ENCODE measurements at regions of chr20 and their contacts with region 1.

Region 1: DNA sequence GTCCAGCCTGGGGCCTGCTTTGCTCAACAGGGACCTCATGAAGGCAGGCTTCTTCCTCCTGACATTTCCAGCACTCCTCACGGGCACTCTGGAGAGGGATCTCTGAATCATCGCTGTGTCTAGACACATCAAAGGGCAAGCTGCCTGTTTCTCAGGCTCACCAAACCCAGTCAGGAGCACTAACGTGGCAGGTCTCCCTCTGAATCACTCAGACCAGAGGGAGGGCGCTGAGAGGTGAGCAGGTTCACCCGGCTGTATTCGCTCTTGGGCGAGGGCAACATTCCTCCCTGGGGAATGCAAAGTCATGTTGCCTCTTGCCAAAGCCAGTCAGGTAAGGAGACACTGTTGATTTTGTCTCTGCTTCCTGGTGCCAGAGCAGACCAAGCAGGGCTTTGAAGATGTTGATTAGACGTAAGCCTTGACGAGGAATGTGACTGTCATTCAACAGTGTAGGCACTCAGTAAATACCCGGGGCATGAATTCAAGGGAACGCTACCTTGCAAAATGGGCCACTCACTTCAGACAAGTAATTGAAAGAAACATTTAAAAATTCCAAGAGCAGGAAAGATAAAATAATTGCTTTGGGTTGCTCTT is 50.1 kb downstream of the CYP24A1 start:
- DNase-seq: peak; percentile 98 to 100
- H3K4me3 ChIP-seq: peak overlapping the region; percentile 35; the same call in 1 of the 2 replicates
- H3K27ac ChIP-seq: peak overlapping the region; percentile 99
- H3K4me1 ChIP-seq: peaks cover 71% of the 10 kb centered on the region
- H3K27me3 ChIP-seq: no peaks in the 10 kb centered on the region
- CTCF ChIP-seq: no peak

Region 2: GRCh38 chr20:54103067-54103761 is 20.5 kb before region 1 on chr20:
- CTCF ChIA-PET with region 1: interaction called, 8 read pairs
- POLR2A ChIA-PET with region 1: no interaction called
- intact Hi-C with region 1: loop called (anchors 1 kb)
- DNase-seq: peak in 1 of 2 experiments; percentile 51
- H3K4me3 ChIP-seq: no peak overlapping the region
- H3K27ac ChIP-seq: no peak overlapping the region
- H3K4me1 ChIP-seq: no peaks in the 10 kb centered on the region; the same call in 1 of the 2 replicates
- H3K27me3 ChIP-seq: no peaks in the 10 kb centered on the region
- CTCF ChIP-seq: peak; percentile 62

Region 3: GRCh38 chr20:54140927-54141566 is 17.4 kb after region 1 on chr20:
- CTCF ChIA-PET with region 1: no interaction called
- POLR2A ChIA-PET with region 1: no interaction called
- intact Hi-C with region 1: loop called (anchors 1 kb)
- DNase-seq: peak; percentile 26 to 96
- H3K4me3 ChIP-seq: no peak overlapping the region
- H3K27ac ChIP-seq: peak overlapping the region; percentile 93
- H3K4me1 ChIP-seq: peaks cover 33% of the 10 kb centered on the region
- H3K27me3 ChIP-seq: no peaks in the 10 kb centered on the region
- CTCF ChIP-seq: no peak

Region 4: DNA sequence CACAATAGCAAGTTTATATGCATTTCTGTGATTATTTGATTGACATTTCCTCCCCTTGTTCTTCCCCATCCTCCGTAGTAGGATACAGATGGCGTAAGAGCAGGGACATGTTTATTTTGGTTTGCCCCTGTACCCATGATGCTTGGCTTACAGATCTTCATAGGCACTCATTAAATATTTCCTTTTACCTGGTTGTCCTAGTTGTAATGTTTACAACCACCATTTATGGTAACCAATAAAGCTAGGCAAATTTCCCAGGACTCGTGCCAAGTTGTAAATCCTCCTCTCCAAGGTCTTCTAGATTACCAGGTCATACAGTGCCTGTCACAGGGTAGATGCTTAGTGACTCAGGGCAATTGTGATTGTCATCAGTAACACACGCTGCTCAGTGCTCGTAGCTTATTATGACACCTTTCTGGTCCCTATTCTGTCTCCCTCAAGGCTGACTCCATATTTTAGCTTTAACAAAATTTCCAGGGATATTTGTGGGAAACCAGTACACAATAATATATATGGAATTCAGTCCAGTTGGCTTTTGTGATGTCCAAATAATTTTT is 25.3 kb after region 1 on chr20:
- CTCF ChIA-PET with region 1: no interaction called
- POLR2A ChIA-PET with region 1: no interaction called
- intact Hi-C with region 1: loop called (anchors 1 kb)
- DNase-seq: peak; percentile 61 to 100
- H3K4me3 ChIP-seq: no peak overlapping the region
- H3K27ac ChIP-seq: peak overlapping the region; percentile 85
- H3K4me1 ChIP-seq: peaks cover 71% of the 10 kb centered on the region
- H3K27me3 ChIP-seq: no peaks in the 10 kb centered on the region
- CTCF ChIP-seq: no peak

Region 5: GRCh38 chr20:54167909-54168872 is 44.5 kb after region 1 on chr20:
- CTCF ChIA-PET with region 1: interaction called, 3 read pairs
- POLR2A ChIA-PET with region 1: no interaction called
- intact Hi-C with region 1: loop called (anchors 1 kb)
- DNase-seq: peak; percentile 80 to 96
- H3K4me3 ChIP-seq: peak overlapping the region; percentile 63
- H3K27ac ChIP-seq: peak overlapping the region; percentile 96
- H3K4me1 ChIP-seq: peaks cover 46% of the 10 kb centered on the region
- H3K27me3 ChIP-seq: no peaks in the 10 kb centered on the region
- CTCF ChIP-seq: no peak

Region 6: GRCh38 chr20:54257071-54257840 is 133.6 kb after region 1 on chr20:
- CTCF ChIA-PET with region 1: interaction called, 3 read pairs
- POLR2A ChIA-PET with region 1: no interaction called
- intact Hi-C with region 1: loop called (anchors 5 kb)
- DNase-seq: peak; percentile 72 to 97
- H3K4me3 ChIP-seq: no peak overlapping the region
- H3K27ac ChIP-seq: peak overlapping the region; percentile 79
- H3K4me1 ChIP-seq: peaks cover 41% of the 10 kb centered on the region
- H3K27me3 ChIP-seq: no peaks in the 10 kb centered on the region
- CTCF ChIP-seq: no peak